Common myeloid progenitor, CD34-positive (primary cell): ENCODE measurements at regions of chr3 and their contacts with region 1.

Region 1: DNA sequence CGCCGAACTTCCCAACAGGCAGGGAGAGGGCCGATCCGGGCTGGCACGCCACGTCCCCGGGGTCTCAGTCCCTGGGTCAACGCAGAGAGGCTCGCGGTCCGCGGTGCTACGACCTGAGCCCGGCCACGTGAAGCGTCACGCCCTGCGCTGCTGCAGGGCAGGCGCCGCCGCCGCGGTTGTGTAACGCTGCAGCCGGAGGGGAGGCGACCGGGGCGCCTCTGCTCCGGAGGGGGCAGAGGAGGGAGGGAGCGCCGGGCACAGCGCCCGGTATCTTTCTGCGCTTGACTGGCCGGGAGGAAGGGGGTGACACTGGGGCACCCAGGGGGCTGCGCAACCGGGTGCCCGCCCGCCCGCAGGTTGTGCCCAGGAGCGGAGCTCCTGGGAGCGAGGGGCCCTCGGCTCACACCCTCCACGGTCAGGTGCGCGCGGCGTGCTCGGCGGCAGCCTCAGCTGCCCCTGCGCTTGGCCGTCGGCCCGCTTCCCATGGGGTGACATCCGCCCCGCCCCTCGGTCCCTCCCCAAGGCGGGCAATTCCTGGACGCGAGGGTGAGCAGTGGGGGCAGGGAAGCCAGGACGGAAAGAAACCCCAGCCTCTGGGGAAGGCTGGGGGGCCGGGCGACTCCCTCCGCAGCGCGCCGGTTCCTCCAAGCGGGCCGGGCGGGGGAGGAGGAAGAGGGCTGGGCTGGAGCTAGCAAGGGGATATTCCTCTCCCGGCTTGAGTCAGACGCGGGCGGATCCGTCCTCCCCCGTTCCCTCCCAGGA is 852 bp upstream of the BHLHE40 start:
- DNase-seq: peak; percentile 92 to 98 (median 94)
- H3K4me3 ChIP-seq: peak overlapping the region; percentile 60 to 99 (median 72)
- H3K27ac ChIP-seq: peak overlapping the region; percentile 88 to 93
- H3K4me1 ChIP-seq: peaks cover 11 to 62% (median 55%) of the 10 kb centered on the region in 4 experiments
- H3K27me3 ChIP-seq: no peaks in the 10 kb centered on the region

Region 2: GRCh38 chr3:4712143-4712542 is 266.2 kb before region 1 on chr3:
- CTCF ChIA-PET with region 1: interaction called, 27 read pairs
- POLR2A ChIA-PET with region 1: interaction called, 3 read pairs
- DNase-seq: no peak
- H3K4me3 ChIP-seq: no peak overlapping the region
- H3K27ac ChIP-seq: no peak overlapping the region
- H3K4me1 ChIP-seq: peaks cover 0 to 14% (median 6%) of the 10 kb centered on the region in 4 experiments
- H3K27me3 ChIP-seq: no peaks in the 10 kb centered on the region

Region 3: DNA sequence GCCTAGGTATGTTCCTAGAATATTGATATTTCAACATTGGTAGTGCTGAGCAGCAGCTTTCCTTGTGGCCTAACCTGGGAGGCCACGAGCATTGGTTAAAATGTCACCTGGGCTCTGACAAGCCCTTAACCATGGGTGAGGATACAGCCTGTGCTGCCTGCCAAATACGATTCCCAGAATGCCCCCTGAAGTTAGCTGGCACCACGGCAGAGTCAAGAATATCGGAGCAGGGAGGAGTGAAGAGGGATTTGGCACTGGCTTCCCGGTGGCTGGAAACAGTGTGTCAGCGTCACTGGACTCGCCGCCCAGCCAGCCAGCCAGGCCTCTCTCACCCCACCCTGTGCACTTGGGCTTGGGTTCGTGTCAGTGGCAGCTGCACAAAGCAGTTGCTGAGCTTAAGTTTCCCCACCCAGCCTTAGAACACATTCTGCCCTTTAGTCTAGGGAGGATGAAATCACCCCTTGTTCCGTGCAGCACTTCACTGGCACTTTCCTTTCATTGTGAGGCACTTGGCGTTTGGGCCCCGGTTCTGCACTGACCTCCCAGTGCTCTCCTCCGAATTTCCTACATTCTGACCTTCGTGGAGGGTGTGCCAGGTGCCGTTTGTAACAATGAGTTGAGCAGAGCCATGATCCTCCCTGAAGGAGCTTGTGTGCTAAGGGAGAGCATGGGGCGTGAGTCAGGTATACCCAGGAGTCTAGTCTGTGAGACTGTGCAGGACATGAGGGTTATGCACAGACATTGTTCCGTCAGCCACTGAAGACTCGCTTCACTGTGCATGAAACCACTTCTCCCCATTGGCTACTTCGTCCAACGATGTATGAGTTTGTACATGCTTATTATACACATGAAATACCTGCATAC is 151.9 kb before region 1 on chr3:
- CTCF ChIA-PET with region 1: interaction called, 7 read pairs
- POLR2A ChIA-PET with region 1: interaction called, 30 read pairs
- DNase-seq: no peak
- H3K4me3 ChIP-seq: no peak overlapping the region
- H3K27ac ChIP-seq: no peak overlapping the region
- H3K4me1 ChIP-seq: peaks cover 26 to 70% (median 57%) of the 10 kb centered on the region in 4 experiments
- H3K27me3 ChIP-seq: no peaks in the 10 kb centered on the region

Region 4: GRCh38 chr3:4831580-4831950 is 146.8 kb before region 1 on chr3:
- CTCF ChIA-PET with region 1: interaction called, 6 read pairs
- POLR2A ChIA-PET with region 1: interaction called, 30 read pairs
- DNase-seq: no peak
- H3K4me3 ChIP-seq: peak overlapping the region in 3 of 7 experiments; percentile 0 to 47 (median 29)
- H3K27ac ChIP-seq: peak overlapping the region in 1 of 2 experiments; percentile 83
- H3K4me1 ChIP-seq: peaks cover 44 to 95% (median 80%) of the 10 kb centered on the region in 4 experiments
- H3K27me3 ChIP-seq: no peaks in the 10 kb centered on the region

Region 5: DNA sequence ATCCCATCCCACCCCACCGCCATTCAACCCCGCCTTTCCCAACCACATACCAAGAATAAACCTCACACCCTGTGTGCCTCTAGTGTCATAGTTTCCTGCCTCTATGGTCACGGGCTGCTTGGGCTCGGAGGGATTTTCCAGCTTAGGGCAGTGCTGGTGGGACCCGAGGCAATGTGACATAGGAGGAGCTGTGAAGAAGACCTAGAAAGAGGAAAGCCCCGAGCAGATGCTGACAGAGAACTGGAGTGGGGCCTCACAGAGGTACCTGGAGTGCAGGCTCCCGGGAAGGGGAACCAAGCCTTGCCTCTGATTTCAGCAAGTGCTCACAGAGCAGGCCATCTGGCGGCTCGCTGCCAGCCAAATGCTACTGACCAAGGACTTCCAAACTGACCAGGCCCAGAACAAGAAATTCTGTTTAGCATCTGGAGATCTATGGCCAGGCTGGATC is 28.4 kb after region 1 on chr3:
- CTCF ChIA-PET with region 1: interaction called, 135 read pairs
- POLR2A ChIA-PET with region 1: interaction called, 57 read pairs
- DNase-seq: peak; percentile 85 to 97 (median 95)
- H3K4me3 ChIP-seq: peak overlapping the region in 2 of 7 experiments; percentile 1 to 7
- H3K27ac ChIP-seq: no peak overlapping the region
- H3K4me1 ChIP-seq: peaks cover 25 to 87% (median 79%) of the 10 kb centered on the region in 4 experiments
- H3K27me3 ChIP-seq: no peaks in the 10 kb centered on the region

Region 6: DNA sequence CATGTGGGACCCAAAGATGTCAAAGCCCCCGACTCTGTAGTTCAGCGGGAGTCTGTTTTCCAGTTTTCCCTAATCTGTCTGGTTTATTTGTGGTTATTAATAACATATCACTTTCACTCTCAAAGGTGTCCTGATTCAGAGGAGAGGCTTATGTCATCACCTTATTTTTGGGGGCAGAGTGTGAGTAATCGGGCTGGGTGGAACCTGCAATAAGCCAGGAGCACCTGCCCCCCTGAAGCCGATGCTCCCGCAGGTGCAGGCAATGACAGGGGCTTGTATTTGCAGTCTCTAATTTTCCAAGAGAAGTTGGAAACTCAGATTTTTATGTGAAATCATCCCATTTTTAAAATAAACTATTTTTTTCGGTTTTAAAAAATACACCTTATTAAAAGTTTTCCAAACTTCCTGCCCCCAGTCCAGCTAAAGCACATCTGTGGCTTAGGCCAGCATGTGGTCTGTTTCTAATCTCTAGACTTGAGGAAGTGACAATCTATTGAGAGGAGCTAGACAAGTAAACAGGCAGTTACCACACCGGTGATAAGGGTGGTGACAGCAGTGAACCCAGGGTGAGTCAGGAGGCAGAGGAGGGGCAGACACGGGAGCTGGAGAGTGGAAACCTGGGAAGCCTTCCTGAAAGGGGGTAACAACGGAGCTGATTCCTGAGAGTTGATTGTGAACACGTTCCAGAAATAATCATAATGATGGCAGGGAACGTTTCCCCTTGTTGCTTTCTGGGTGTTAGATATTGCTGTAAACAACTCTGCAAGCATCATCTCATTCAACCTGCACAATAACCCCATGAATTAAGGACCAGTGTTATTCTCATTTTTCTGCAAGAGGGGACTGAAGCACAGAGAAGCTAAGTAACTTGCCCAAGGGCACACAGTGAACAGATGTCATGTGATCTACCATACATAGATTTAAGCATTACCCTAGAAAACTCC is 38.1 kb after region 1 on chr3:
- CTCF ChIA-PET with region 1: interaction called, 80 read pairs
- POLR2A ChIA-PET with region 1: interaction called, 57 read pairs
- DNase-seq: peak; percentile 60 to 89 (median 78)
- H3K4me3 ChIP-seq: peak overlapping the region in 3 of 7 experiments; percentile 19 to 39 (median 34)
- H3K27ac ChIP-seq: peak overlapping the region in 1 of 2 experiments; percentile 7
- H3K4me1 ChIP-seq: peaks cover 31 to 88% (median 76%) of the 10 kb centered on the region in 4 experiments
- H3K27me3 ChIP-seq: no peaks in the 10 kb centered on the region

Region 7: DNA sequence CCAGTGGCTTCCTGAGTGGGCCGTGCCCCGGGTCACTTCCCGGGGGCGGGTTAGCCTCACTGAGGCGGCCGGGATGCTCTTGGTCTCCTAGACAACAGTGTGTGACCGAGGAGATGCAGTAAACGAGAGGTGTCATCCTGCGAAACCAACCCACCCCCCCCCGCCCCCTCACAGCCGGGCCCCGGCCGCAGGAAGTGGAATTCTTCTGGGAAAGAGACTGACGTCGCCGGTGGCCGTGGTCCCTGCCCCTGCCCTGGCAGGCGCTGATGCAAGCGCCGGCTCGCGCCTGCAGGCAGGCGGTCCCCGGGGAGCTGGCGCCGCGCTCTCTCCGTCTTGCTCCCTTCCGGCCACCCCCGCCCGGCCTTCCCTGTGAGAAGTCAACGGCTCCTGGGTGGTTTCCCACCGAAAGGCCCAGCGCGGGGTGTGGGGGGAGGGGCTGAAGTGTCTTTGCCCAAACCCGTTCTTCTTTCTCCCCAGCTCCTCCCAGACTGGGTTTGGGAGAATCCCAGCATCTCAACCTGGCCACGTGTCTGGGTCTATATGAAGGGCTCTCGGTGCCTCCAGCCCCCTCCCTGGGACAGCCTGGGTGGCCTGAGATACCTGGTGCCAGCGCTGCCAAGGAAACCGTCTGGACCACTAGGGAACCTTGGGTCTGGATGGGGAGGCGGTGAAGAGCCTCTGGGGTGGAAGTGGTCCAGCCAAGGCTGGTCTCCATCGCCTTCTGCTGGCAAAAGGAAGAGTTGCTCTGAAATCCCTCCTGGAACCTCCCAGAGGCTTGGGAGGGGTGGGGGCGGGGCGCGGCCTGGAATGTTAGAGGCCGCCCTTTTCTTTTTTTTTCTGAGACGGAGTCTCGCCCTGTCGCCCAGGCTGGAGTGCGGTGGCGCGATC is 48.2 kb after region 1 on chr3:
- CTCF ChIA-PET with region 1: interaction called, 80 read pairs
- POLR2A ChIA-PET with region 1: interaction called, 15 read pairs
- DNase-seq: peak; percentile 84 to 89 (median 86)
- H3K4me3 ChIP-seq: peak overlapping the region; percentile 13 to 78 (median 45)
- H3K27ac ChIP-seq: no peak overlapping the region
- H3K4me1 ChIP-seq: peaks cover 0 to 16% (median 13%) of the 10 kb centered on the region in 4 experiments
- H3K27me3 ChIP-seq: no peaks in the 10 kb centered on the region